ENCODE measurements at regions of chr9 and their contacts with region 1.

Region 1: GRCh38 chr9:112867416-112867991 is 23.2 kb downstream of the SLC46A2 start:
- DNase-seq: peak; percentile 78 to 82
- H3K4me3 ChIP-seq: no peak overlapping the region
- H3K27ac ChIP-seq: peak overlapping the region; percentile 81
- H3K4me1 ChIP-seq: peaks cover 20% of the 10 kb centered on the region
- H3K27me3 ChIP-seq: no peaks in the 10 kb centered on the region
- CTCF ChIP-seq: no peak

Region 2: GRCh38 chr9:112856200-112856599 is 11.3 kb before region 1 on chr9:
- CTCF ChIA-PET with region 1: no interaction called
- POLR2A ChIA-PET with region 1: interaction called, 15 read pairs
- intact Hi-C with region 1: no loop called
- DNase-seq: no peak
- H3K4me3 ChIP-seq: no peak overlapping the region
- H3K27ac ChIP-seq: no peak overlapping the region
- H3K4me1 ChIP-seq: no peaks in the 10 kb centered on the region
- H3K27me3 ChIP-seq: no peaks in the 10 kb centered on the region
- CTCF ChIP-seq: no peak

Region 3: DNA sequence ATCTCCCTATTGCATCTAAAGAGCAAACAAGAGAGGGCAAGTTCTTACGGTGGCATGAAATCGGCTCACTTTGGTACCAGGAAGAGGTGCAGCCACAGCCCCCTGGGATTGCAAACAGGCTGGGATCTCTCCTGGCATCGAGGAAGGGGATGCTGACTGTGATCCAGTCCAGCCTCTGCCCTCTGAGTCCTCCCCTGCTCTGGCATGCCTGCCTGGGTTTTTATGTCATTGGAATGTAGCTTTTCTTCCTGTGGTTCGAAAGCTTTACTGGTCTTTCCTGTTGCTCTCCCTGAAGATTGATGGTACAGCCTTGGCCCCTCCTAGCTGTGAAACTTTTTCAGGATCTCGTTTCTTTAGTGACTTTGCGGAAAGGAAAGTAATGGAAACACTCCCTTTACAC is 16.6 kb after region 1 on chr9:
- CTCF ChIA-PET with region 1: interaction called, 3 read pairs
- POLR2A ChIA-PET with region 1: no interaction called
- intact Hi-C with region 1: loop called (anchors 1 kb)
- DNase-seq: peak; percentile 69 to 80
- H3K4me3 ChIP-seq: no peak overlapping the region
- H3K27ac ChIP-seq: no peak overlapping the region
- H3K4me1 ChIP-seq: peaks cover 9% of the 10 kb centered on the region; the same call in 1 of the 2 replicates
- H3K27me3 ChIP-seq: no peaks in the 10 kb centered on the region
- CTCF ChIP-seq: no peak

Region 4: GRCh38 chr9:112898872-112899311 is 31.4 kb after region 1 on chr9:
- CTCF ChIA-PET with region 1: interaction called, 10 read pairs
- POLR2A ChIA-PET with region 1: interaction called, 5 read pairs
- intact Hi-C with region 1: loop called (anchors 1 kb)
- DNase-seq: peak in 1 of 2 experiments; percentile 49
- H3K4me3 ChIP-seq: no peak overlapping the region
- H3K27ac ChIP-seq: no peak overlapping the region
- H3K4me1 ChIP-seq: peaks cover 7% of the 10 kb centered on the region; the same call in 1 of the 2 replicates
- H3K27me3 ChIP-seq: no peaks in the 10 kb centered on the region
- CTCF ChIP-seq: no peak